OCI-LY7 (cell line): ENCODE measurements at regions of chr14 and their contacts with region 1.

Region 1: DNA sequence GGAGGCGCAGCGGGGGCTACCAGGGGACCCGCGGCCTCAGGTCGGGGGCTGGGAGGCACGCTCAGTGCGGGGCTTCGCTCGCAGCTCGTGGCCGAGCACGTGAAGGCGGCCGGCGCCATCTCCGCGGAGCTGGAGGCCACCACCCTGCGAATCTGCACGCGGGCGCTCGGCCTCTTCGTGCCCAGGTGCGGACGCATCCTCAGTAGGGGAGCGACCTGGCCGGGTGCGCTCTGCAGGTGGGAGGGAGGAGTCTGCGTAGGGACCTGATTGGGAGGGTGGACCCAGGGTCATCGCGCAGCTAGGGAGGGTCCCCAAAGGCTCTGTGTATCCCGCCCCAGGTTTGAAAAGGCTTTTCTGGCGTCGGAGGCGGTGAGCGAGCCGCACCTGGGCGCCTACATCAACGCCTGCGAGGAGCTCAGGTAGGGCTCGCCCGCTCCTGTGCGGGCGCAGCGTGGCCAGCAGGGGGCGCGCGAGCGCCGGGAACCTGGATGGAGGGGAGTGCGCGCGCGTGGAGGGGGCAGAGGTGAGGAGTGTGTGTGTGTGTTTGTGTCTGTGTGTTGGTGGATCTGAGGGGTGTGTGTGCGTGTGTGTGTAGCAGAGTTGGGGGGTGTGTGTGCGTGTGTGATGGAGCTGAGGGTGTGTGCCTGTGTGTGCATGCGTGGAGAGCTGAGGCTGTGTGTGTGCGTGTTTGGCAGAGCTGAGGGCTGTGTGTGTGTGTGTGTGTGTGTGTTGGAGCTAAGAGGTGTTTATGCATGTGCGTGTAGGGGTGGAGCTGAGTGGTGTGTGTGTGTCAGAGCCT is 10.3 kb downstream of the EXOC3L4 start:
- DNase-seq: peak; percentile 66
- H3K4me3 ChIP-seq: peak overlapping the region; percentile 13
- H3K27ac ChIP-seq: peak overlapping the region; percentile 62
- H3K4me1 ChIP-seq: peaks cover 34% of the 10 kb centered on the region
- CTCF ChIP-seq: peak; percentile 92

Region 2: DNA sequence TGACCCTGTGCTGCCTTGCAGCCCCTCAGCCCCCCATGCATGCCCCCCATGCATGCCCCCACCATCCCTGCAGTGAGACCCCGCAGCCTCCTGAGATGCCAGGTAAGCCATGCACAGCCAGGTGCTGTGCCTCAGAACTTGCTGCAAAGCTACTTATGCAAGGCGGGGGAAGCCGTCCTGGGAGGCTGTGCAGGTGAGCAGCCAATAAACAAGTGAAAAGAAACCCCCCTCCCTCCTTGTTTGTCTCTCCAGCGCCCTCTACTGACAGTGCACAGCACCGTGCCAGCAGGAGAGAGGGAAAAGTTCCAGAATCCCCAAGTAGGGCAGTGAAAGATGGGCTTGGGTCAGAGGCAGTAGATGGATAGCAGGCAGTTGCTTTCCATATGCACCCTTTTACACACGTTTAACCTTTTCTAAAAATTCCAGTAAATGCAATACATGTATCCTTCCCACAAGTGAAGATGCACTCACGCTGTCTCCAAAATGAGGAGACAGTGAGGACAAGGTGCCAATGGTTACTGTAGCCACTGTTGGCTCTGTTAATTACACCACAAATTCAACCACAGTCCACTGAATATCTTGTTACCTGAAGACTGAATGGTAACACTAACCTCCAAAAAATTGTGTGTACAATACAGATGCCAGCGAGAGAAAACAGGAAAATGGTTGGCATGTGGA is 36.4 kb after region 1 on chr14:
- CTCF ChIA-PET with region 1: interaction called, 24 read pairs
- POLR2A ChIA-PET with region 1: interaction called, 3 read pairs
- intact Hi-C with region 1: loop called (anchors 1 kb)
- DNase-seq: peak; percentile 91
- H3K4me3 ChIP-seq: peak overlapping the region; percentile 58
- H3K27ac ChIP-seq: peak overlapping the region; percentile 91
- H3K4me1 ChIP-seq: peaks cover 34% of the 10 kb centered on the region
- CTCF ChIP-seq: peak; percentile 96

Region 3: GRCh38 chr14:103281496-103282231 is 176.8 kb after region 1 on chr14:
- CTCF ChIA-PET with region 1: no interaction called
- POLR2A ChIA-PET with region 1: no interaction called
- intact Hi-C with region 1: no loop called
- DNase-seq: no peak
- H3K4me3 ChIP-seq: no peak overlapping the region
- H3K27ac ChIP-seq: no peak overlapping the region
- H3K4me1 ChIP-seq: no peaks in the 10 kb centered on the region
- CTCF ChIP-seq: no peak

Region 4: DNA sequence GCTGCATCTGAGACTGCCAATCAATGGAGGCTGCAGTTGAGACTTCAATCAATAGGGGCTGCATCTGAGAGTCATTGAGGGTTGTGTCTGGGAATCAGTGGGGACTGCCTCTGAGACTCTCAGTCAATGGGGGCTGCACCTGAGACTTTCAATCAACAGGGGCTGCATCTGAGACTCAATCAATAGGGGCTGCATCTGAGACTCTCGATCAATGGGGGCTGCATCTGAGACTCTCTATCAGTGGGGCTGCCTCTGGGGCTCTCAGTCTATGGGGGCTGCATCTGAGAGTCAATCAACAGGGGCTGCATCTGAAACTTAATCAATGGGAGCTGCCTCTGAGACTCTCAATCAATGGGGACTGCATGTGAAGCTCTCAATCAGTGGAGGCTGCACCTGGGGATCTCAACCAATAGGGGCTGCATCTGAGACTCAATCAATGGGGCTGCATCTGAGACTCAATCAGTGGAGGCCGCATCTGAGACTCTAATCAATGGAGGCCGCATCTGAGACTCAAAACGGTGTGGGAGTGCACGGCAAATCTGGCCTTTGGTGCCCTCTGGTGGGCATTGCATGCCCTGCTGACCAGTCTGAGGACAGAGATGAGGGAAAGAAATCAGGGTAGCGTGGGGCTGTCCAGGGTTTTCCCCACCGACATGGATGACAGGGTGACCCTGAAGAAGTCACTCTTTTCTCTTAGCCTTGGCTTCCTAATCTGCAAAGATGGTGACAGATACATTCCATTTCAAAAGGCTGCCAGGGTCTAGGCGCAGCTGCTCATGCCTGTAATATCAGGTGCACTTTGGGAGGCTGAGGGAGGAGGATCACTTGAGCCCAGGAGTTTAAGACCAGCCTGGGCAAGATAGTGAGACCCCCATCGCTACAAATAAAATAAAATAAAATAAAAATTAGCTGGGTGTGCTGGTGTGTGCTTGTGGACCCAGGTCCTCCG is 187.8 kb after region 1 on chr14:
- CTCF ChIA-PET with region 1: interaction called, 3 read pairs
- POLR2A ChIA-PET with region 1: no interaction called
- intact Hi-C with region 1: loop called (anchors 1 kb)
- DNase-seq: peak; percentile 63
- H3K4me3 ChIP-seq: no peak overlapping the region
- H3K27ac ChIP-seq: no peak overlapping the region
- H3K4me1 ChIP-seq: no peaks in the 10 kb centered on the region
- CTCF ChIP-seq: peak; percentile 87

Region 5: GRCh38 chr14:104244221-104244987 is 1139.6 kb after region 1 on chr14:
- CTCF ChIA-PET with region 1: no interaction called
- POLR2A ChIA-PET with region 1: no interaction called
- intact Hi-C with region 1: no loop called
- DNase-seq: no peak
- H3K4me3 ChIP-seq: no peak overlapping the region
- H3K27ac ChIP-seq: no peak overlapping the region
- H3K4me1 ChIP-seq: peaks cover 25% of the 10 kb centered on the region
- CTCF ChIP-seq: no peak